Activated B cell treated with CpG ODN at 0.5 μM for 24 hours (primary cell): ENCODE measurements at regions of chr13 and their contacts with region 1.

Region 1: DNA sequence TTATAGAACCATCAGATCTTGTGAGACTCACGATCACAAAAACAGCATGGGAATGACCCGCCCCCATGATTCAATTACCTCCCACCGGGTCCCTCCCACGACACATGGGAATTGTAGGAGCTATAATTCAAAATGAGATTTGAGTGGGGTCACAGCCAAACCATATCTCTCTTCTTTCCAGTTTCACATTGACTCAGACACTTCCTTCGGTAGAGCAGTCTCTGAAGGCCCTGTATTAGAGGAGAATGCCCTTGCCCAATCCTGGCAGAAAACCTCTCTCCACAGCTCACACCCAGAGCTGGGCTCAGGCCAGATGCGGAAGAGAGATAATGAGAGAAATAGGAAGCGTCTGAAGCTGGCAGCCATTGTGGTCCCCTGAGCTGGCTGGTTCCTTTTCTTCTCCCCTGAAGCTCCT is 72.4 kb upstream of the CLDN10 start:
- DNase-seq: no peak
- ATAC-seq: no peak
- H3K4me3 Mint-ChIP-seq: no peak overlapping the region
- H3K27ac Mint-ChIP-seq: no peak overlapping the region
- H3K4me1 Mint-ChIP-seq: peaks cover 5% of the 10 kb centered on the region
- H3K27me3 Mint-ChIP-seq: peaks cover 9% of the 10 kb centered on the region
- CTCF ChIP-seq: no peak

Region 2: DNA sequence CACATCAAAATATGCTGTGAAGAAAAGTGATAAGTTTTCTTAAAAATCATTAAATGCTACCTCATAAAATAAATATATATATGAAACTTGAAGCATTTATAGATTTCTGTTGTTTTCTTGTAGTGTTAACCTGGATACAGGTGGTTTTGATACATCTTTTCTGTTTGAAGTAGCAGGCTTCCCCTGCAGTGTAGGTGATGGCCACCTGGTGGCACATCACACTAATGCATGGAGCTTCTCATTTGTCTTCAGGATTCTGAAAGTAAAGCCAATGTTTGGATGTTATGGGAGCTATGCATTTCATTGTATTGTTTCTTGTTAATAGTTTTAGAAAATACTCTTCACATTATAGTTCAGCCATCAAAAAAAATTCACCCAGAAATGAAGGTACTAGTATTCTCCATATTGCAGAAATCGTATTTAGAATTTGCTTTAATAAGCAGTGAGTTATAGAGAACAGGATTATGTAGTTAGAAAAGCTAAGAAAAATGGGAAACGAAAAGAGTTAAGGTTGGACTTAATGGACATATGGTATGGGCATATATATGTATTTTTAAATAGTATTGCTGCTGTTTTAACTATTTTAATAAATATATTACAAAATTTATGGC is 859.7 kb before region 1 on chr13:
- CTCF ChIA-PET with region 1: interaction called, 3 read pairs
- POLR2A ChIA-PET with region 1: no interaction called
- intact Hi-C with region 1: loop called (anchors 5 kb)
- DNase-seq: no peak
- ATAC-seq: no peak
- H3K4me3 Mint-ChIP-seq: no peak overlapping the region
- H3K27ac Mint-ChIP-seq: no peak overlapping the region
- H3K4me1 Mint-ChIP-seq: peaks cover 3% of the 10 kb centered on the region
- H3K27me3 Mint-ChIP-seq: no peaks in the 10 kb centered on the region
- CTCF ChIP-seq: no peak

Region 3: GRCh38 chr13:95174517-95174916 is 305.6 kb before region 1 on chr13:
- CTCF ChIA-PET with region 1: no interaction called
- POLR2A ChIA-PET with region 1: no interaction called
- intact Hi-C with region 1: loop called (anchors 5 kb)
- DNase-seq: no peak
- ATAC-seq: no peak
- H3K4me3 Mint-ChIP-seq: no peak overlapping the region
- H3K27ac Mint-ChIP-seq: no peak overlapping the region
- H3K4me1 Mint-ChIP-seq: no peaks in the 10 kb centered on the region
- H3K27me3 Mint-ChIP-seq: no peaks in the 10 kb centered on the region
- CTCF ChIP-seq: no peak

Region 4: DNA sequence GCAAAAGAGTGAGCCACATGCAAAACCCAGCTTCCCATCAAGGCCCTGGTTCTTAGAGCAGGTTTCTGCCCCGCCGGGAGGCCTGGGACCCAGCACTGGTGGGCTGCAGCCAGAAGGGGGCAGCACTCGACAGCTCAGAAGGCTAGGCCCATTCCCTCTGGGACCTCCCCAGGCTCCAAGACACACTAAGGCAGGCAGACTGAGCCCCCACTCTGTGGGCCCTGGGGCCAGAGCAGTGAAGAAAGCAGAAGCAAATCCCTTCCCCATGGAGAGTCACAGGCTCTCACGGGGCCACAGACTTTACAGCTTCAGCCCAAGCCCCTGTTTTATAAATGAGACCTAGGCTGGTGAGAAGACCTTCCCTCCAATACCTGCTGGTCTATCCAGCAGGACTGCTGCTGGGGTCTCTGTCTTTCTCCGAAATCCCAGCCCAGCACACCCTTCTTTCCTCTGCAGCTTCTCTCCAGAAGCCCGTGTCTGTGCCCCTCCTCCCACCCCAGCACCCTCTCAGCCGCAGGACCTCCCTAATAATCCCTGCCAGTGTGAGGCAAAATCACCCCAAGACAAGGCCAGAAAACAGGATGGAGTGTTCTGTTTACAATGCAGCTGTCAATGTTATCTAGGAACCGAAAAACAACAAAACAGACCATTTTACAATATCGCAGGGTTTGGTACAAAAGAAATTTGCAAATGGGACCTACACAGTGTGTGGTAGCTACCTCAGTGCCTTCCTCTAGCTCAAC is 288.1 kb before region 1 on chr13:
- CTCF ChIA-PET with region 1: interaction called, 16 read pairs
- POLR2A ChIA-PET with region 1: no interaction called
- intact Hi-C with region 1: loop called (anchors 1 kb)
- DNase-seq: peak; percentile 67
- ATAC-seq: peak; percentile 97
- H3K4me3 Mint-ChIP-seq: no peak overlapping the region
- H3K27ac Mint-ChIP-seq: no peak overlapping the region
- H3K4me1 Mint-ChIP-seq: peaks cover 1% of the 10 kb centered on the region
- H3K27me3 Mint-ChIP-seq: no peaks in the 10 kb centered on the region
- CTCF ChIP-seq: no peak

Region 5: DNA sequence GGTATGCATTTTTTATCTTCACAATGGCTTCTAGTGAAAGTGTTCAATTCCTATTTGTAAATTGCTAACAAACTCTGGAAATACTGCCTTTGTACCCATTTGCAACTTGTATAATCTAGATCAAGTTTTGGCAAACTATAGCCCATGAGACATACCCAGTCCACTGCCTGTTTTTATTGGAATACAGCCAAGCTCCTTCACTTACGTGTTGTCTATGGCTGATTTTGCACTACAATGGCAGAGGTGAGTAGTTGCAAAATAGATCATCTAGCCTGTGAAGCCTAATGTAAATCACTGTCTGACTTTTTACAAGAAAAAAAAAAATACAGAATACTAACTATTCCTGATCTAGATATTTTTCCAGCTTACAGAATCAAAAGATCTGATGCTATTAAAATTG is 127.2 kb after region 1 on chr13:
- CTCF ChIA-PET with region 1: no interaction called
- POLR2A ChIA-PET with region 1: no interaction called
- intact Hi-C with region 1: no loop called
- DNase-seq: no peak
- ATAC-seq: no peak
- H3K4me3 Mint-ChIP-seq: no peak overlapping the region
- H3K27ac Mint-ChIP-seq: no peak overlapping the region
- H3K4me1 Mint-ChIP-seq: no peaks in the 10 kb centered on the region
- H3K27me3 Mint-ChIP-seq: peaks cover 5% of the 10 kb centered on the region
- CTCF ChIP-seq: no peak

Region 6: GRCh38 chr13:95636853-95637252 is 156.7 kb after region 1 on chr13:
- CTCF ChIA-PET with region 1: no interaction called
- POLR2A ChIA-PET with region 1: no interaction called
- intact Hi-C with region 1: no loop called
- DNase-seq: no peak
- ATAC-seq: no peak
- H3K4me3 Mint-ChIP-seq: no peak overlapping the region
- H3K27ac Mint-ChIP-seq: no peak overlapping the region
- H3K4me1 Mint-ChIP-seq: peaks cover 3% of the 10 kb centered on the region
- H3K27me3 Mint-ChIP-seq: peaks cover 27% of the 10 kb centered on the region
- CTCF ChIP-seq: no peak